Right lobe of liver (tissue), 6 donors: ENCODE measurements at regions of chr1 and their contacts with region 1.

Region 1: GRCh38 chr1:54944610-54945544 is 35.6 kb upstream of the TMEM61 start:
- DNase-seq: peak; percentile 65 to 75 (median 65)
- ATAC-seq: peak; percentile 89 to 94 (median 91)
- H3K4me3 ChIP-seq: peak overlapping the region in 1 of 3 donors; percentile 21
- H3K27ac ChIP-seq: no peak overlapping the region
- H3K4me1 ChIP-seq: peaks cover 0 to 9% (median 0%) of the 10 kb centered on the region in 4 donors
- H3K27me3 ChIP-seq: no peaks in the 10 kb centered on the region
- CTCF ChIP-seq: peak; percentile 65 to 87 (median 84)
- POLR2A ChIP-seq: no peak

Region 2: DNA sequence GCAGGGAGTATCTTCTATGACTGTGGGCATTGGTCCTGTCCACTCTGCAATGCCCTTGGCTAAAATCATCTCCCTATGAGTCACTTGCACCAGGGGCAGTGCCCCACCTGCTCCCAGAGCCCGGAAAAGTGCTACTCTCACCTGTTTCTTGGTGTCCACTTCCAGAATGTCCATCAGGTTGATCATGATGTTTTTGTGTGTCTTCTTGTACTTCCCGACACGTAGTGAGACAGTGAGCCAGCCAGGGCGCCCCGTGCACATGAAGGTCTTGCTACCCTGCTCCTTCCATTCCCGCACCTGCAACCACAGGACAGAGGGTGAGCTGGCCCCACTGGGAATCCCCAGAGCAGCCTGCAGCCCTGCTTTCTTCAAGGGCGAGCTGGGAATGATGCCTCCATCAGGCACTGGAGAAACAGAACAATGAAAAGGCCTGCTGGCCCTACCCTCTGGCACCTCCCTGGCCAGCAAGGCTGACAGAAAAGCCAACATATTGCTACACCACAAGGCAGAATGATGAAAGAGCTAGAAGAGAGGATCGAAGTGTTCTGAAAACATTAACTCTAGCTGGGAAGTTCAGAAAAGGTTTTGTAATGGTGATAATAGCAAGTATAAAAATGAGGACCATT is 61.3 kb before region 1 on chr1:
- intact Hi-C with region 1: no loop called
- DNase-seq: peak in 1 of 3 donors; percentile 73
- ATAC-seq: peak; percentile 19 to 52 (median 28)
- H3K4me3 ChIP-seq: peak overlapping the region; percentile 96 to 99 (median 96)
- H3K27ac ChIP-seq: peak overlapping the region; percentile 66 to 89 (median 71)
- H3K4me1 ChIP-seq: peaks cover 0 to 60% (median 23%) of the 10 kb centered on the region in 4 donors
- H3K27me3 ChIP-seq: no peaks in the 10 kb centered on the region
- CTCF ChIP-seq: no peak
- POLR2A ChIP-seq: no peak

Region 3: GRCh38 chr1:54894271-54894670 is 50.6 kb before region 1 on chr1:
- intact Hi-C with region 1: loop called in 1 of 2 experiments (anchors 10 kb)
- DNase-seq: no peak
- ATAC-seq: no peak
- H3K4me3 ChIP-seq: no peak overlapping the region
- H3K27ac ChIP-seq: no peak overlapping the region
- H3K4me1 ChIP-seq: peaks cover 0 to 12% (median 0%) of the 10 kb centered on the region in 4 donors
- H3K27me3 ChIP-seq: no peaks in the 10 kb centered on the region
- CTCF ChIP-seq: no peak
- POLR2A ChIP-seq: no peak

Region 4: DNA sequence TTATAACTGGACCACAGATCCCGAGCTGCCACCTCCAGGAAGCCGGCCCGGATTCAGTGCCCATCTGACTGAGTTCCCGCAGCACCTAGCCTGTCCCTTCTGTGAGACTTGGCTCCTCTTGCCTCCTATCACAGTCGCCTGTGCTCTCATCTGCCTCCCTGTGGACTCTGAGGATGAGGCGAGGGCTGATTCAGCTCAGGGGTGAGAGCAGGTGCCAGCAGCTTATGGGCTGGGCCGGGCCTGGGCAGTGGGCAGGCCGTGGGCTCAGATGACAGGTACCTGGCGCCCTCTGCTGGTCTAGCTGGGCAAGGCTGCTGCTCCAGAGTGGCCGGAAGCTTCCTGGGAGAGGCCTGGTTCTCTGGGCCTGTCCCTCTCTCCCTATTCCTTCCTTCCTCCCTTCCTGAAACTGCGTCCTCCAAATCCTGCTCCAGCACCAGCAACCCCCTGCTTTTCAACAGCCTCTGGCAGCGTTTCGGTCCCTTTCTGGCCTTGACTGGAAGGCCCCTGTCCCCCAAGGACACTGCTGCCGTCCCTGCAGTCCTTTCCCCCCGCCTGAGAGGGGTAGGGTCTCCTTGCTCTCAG is 77.2 kb after region 1 on chr1:
- intact Hi-C with region 1: no loop called
- DNase-seq: peak; percentile 90 to 91 (median 91)
- ATAC-seq: peak; percentile 100
- H3K4me3 ChIP-seq: no peak overlapping the region
- H3K27ac ChIP-seq: no peak overlapping the region
- H3K4me1 ChIP-seq: no peaks in the 10 kb centered on the region
- H3K27me3 ChIP-seq: no peaks in the 10 kb centered on the region
- CTCF ChIP-seq: peak; percentile 93 to 98 (median 94)
- POLR2A ChIP-seq: peak; percentile 14

Region 5: DNA sequence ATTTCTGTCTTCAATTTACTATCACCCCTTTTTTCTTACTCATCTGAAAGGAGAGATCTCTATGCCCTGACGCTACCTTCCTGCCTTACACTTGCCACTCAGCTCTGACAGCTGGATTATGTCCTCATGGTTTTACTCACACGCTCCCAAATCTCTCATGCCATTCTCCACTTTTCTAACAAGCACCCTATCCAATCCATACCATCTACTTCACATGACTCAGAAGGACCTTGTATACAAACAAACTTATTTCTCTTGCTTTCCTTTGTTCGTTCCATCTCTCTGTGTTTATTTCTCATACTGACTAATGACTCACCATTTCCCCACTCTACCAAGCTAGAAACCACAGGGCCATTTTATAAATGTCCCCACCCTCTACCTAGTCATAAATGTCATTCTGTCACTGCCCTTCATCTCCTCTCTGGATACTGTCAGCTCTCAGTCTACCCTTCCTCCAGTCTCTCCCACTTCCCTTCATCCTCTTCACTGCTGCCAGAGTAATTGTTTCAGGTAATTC is 183.0 kb after region 1 on chr1:
- intact Hi-C with region 1: no loop called
- DNase-seq: no peak
- ATAC-seq: peak; percentile 12 to 27 (median 16)
- H3K4me3 ChIP-seq: no peak overlapping the region
- H3K27ac ChIP-seq: peak overlapping the region in 1 of 3 donors; percentile 31
- H3K4me1 ChIP-seq: peaks cover 0 to 22% (median 3%) of the 10 kb centered on the region in 4 donors
- H3K27me3 ChIP-seq: no peaks in the 10 kb centered on the region
- CTCF ChIP-seq: no peak
- POLR2A ChIP-seq: no peak